ENCODE measurements at regions of chr2 and their contacts with region 1.

Region 1: GRCh38 chr2:192151853-192152252 is 42.9 kb downstream of the TMEFF2 start:
- DNase-seq: no peak
- ATAC-seq: no peak
- H3K4me3 ChIP-seq: no peak overlapping the region
- H3K27ac ChIP-seq: no peak overlapping the region
- H3K4me1 ChIP-seq: no peaks in the 10 kb centered on the region
- H3K27me3 ChIP-seq: no peaks in the 10 kb centered on the region
- CTCF ChIP-seq: no peak
- POLR2A ChIP-seq: no peak

Region 2: DNA sequence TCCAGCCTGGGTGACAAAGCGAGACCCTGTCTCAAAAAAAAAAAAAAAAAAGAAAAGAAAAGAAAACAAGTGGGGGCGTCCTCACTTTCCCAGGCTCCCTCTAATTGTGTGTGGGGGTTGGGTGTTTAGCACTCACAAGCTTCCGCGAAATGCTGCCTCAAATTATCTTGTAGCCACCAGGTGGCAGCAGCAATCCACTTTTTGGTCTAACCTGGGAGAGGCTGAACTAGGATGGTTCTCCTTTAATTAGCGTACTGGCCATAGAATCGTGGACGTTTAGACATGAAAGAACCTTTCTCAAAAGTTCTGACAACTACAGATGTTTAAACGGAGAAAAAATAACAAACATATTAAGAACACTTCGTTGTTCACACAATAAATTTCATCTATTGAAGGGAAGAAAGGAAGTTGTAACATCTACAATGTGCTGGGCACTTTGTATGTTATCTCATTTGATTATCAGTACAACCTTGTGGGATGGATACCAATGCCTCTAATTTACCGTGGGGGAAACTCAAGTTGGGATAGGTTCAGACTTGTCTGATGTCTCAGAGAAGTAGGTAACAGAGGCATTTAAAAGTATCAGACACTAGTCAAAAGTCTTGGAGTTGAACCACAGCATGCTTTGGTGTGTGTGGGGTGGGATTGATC is 596.6 kb before region 1 on chr2:
- in situ Hi-C with region 1: loop called in 1 of 4 experiments (anchors 10 kb)
- intact Hi-C with region 1: no loop called
- DNase-seq: peak; percentile 55 to 62
- ATAC-seq: peak; percentile 94 to 96
- H3K4me3 ChIP-seq: no peak overlapping the region
- H3K27ac ChIP-seq: no peak overlapping the region
- H3K4me1 ChIP-seq: no peaks in the 10 kb centered on the region
- H3K27me3 ChIP-seq: no peaks in the 10 kb centered on the region
- CTCF ChIP-seq: peak; percentile 57 to 73 (median 64)
- POLR2A ChIP-seq: no peak

Region 3: DNA sequence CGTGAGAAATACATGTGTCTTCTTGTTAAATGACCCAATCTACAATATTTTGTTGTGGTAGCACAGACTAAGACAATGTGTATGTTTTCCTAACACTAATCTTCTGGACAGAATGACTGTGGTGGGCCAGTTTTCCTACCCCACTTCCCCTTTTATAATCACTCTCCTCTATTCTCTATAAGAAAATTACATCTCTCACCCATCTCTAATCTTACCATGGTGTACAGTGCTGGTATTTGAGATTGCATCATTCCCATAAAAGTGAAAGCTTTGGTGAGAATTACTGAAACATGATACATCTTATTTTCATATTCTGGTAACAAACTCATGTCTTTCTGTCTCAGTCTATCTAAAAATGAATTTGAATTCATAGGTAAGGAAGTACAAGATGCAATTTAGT is 345.5 kb before region 1 on chr2:
- in situ Hi-C with region 1: loop called in 2 of 4 experiments (anchors 5 to 10 kb)
- intact Hi-C with region 1: no loop called
- DNase-seq: no peak
- ATAC-seq: no peak
- H3K4me3 ChIP-seq: no peak overlapping the region
- H3K27ac ChIP-seq: no peak overlapping the region
- H3K4me1 ChIP-seq: no peaks in the 10 kb centered on the region
- H3K27me3 ChIP-seq: no peaks in the 10 kb centered on the region
- CTCF ChIP-seq: no peak
- POLR2A ChIP-seq: no peak

Region 4: GRCh38 chr2:191811807-191812602 is 339.8 kb before region 1 on chr2:
- in situ Hi-C with region 1: loop called in 2 of 4 experiments (anchors 5 to 10 kb)
- intact Hi-C with region 1: no loop called
- DNase-seq: peak in 1 of 2 donors; percentile 22
- ATAC-seq: peak; percentile 42 to 62
- H3K4me3 ChIP-seq: peak overlapping the region in 2 of 4 donors; percentile 17 to 29
- H3K27ac ChIP-seq: no peak overlapping the region
- H3K4me1 ChIP-seq: no peaks in the 10 kb centered on the region
- H3K27me3 ChIP-seq: no peaks in the 10 kb centered on the region
- CTCF ChIP-seq: peak; percentile 21 to 71 (median 62)
- POLR2A ChIP-seq: no peak

Measured in gastrocnemius medialis (tissue), 4 donors.